Activated T-helper 1 cell treated with anti-CD3 and anti-CD28 coated beads, Interleukin-12 subunit alpha, Interleukin-12 subunit beta, Interleukin-2, Interleukin-4 antibody, amounts not matched to agents 30 ng/mL and 10 ng/mL and 1 ng/mL, durations not matched to agents 14 hours and 24 hours and 36 hours (primary cell): ENCODE measurements at regions of chr5 and their contacts with region 1.

Region 1: DNA sequence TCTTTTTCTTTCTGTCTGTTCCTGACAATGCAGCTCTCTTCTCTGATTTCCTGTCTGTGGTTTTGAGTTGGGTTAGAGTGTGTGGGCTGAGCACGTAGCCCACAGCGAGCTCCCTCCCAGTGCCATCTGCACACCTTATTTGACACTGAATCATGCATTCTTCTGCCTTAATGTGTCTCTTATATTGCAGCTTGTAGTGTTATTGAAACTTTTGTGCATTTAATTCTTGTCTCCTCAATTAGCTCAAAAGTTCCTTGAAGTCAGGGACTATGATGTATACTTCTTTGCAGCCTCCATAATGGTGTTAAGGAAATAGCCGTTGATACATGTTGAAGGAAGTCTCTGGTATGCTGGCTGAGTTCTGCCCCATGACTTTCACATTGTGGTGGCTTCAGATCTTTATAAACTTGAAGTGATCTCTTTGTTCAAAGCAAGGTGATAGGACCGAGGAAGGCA is 576.2 kb upstream of the CLINT1 start:
- DNase-seq: peak; percentile 17
- H3K4me3 Mint-ChIP-seq: peak overlapping the region; percentile 48
- H3K27ac Mint-ChIP-seq: peak overlapping the region; percentile 91
- H3K4me1 Mint-ChIP-seq: peaks cover 48% of the 10 kb centered on the region
- H3K27me3 Mint-ChIP-seq: peaks cover 2% of the 10 kb centered on the region

Region 2: DNA sequence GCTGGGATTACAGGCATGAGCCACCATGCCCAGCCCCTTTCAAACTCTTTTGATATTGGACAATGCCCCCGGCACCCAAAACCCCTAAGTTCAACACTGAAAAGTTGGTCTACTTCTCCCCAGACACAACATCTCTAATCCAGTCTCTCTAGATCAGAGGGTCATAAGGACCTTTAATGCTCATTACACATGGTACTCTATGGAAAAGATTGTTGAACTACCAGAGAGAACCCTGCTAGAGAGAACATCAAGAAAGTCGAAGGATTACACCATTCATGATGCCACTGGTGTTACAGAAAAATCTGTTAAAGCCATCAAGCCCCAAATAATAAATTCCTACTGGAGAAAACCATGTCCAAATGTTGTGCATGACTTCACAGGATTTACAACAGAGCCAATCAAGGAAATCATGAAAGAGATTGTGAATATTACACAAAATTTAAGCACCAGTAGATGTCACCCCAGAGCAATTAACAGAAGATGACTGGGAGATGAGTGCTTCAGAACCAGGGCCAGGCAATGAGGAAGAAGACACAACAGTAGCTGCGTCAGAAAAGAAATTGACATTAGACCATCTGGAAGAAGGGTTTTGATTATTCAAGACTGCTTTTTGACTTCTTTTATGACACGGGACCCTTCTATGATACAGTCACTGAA is 1003.5 kb before region 1 on chr5:
- intact Hi-C with region 1: no loop called
- DNase-seq: peak; percentile 7
- H3K4me3 Mint-ChIP-seq: no peak overlapping the region
- H3K27ac Mint-ChIP-seq: no peak overlapping the region
- H3K4me1 Mint-ChIP-seq: peaks cover 8% of the 10 kb centered on the region
- H3K27me3 Mint-ChIP-seq: peaks cover 22% of the 10 kb centered on the region

Region 3: DNA sequence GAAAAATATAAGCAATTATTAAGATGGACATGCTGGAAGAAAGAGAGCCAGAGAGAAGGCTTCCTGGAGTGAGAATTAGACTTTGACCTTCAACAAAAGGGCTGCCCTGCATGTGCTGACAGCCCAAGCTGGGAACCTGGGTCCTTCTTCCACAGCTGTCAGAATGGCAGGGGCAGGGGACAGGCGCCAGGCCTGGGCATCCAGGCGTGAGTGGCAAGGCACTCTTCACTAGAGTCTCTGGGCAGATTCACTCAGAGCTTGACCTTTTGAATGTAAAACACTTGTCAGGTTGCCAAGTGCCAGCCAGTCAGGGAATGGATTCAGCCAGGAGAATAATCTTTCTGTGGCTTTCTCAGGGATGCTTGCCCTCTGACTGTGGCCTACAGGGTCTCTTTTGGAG is 457.1 kb before region 1 on chr5:
- intact Hi-C with region 1: no loop called
- DNase-seq: no peak
- H3K4me3 Mint-ChIP-seq: no peak overlapping the region
- H3K27ac Mint-ChIP-seq: no peak overlapping the region
- H3K4me1 Mint-ChIP-seq: no peaks in the 10 kb centered on the region
- H3K27me3 Mint-ChIP-seq: peaks cover 14% of the 10 kb centered on the region

Region 4: GRCh38 chr5:158513490-158514318 is 78.5 kb after region 1 on chr5:
- intact Hi-C with region 1: loop called (anchors 2 kb)
- DNase-seq: no peak
- H3K4me3 Mint-ChIP-seq: peak overlapping the region; percentile 27
- H3K27ac Mint-ChIP-seq: peak overlapping the region; percentile 73
- H3K4me1 Mint-ChIP-seq: peaks cover 33% of the 10 kb centered on the region
- H3K27me3 Mint-ChIP-seq: no peaks in the 10 kb centered on the region

Region 5: DNA sequence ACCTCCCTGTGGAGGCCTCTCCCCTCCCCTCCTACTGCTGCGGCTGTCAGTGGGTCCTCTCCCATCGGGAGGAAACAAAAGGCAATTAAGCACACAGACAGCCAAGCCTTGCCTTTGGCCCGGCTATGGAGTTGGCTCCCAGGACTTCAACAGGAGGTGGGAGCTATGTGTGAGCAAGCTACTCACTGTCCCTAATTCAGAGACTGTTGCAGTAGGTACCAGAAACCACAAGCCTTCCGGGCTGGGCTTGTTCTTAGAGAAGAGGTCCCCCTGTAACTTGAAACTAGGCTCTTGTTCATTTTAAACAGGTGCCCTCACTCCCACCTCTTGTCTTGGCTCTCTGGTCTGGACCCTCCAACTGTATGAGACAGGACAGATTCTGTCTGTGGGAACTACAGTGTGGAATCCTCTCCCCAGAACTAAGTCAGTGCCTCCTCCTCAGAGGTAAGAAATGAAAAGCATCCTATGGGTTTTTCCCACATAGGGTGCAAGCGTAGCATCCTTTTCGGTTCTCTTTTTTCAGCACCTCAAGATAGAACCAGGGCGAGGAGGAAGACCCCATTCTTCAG is 103.4 kb after region 1 on chr5:
- intact Hi-C with region 1: no loop called
- DNase-seq: no peak
- H3K4me3 Mint-ChIP-seq: no peak overlapping the region
- H3K27ac Mint-ChIP-seq: no peak overlapping the region
- H3K4me1 Mint-ChIP-seq: peaks cover 4% of the 10 kb centered on the region
- H3K27me3 Mint-ChIP-seq: peaks cover 11% of the 10 kb centered on the region

Region 6: DNA sequence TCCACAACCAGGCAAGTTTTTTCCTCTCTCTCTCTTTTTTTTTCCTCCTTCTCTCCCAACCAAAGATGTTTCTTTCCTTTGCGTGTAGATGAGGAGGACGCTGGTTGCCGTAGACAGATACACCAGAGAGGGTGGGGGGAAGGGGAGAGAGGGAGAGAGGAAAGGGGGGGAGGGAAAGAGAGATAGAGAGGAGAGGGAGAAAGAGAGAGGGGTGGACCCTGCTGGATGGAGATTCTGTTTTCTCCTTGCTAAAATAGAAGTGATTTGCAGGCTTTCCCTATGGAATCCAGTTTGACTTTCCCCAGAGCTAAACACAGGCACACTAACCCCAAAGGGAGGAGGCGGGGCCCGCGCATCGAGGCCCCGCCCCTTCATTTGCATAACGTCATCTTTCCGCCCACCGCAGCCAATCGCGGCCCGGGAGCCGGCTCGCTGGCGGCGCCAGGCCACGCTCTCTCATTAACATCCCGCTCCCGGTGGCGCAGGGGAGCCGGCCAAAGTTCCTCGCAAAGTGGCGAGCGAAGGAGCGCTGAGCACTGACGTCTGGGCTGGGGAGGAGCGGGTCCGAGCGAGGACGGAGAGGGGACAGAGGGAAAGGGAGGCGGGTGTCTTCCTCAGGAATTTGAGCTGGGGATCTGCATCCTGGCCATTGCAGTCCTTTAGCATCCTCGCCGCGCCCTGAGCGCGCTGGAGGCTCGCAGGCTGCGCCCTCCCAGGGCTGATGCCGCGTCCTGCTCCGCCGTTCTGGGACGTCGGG is 665.0 kb after region 1 on chr5:
- intact Hi-C with region 1: loop called (anchors 2 kb)
- DNase-seq: peak; percentile 84
- H3K4me3 Mint-ChIP-seq: peak overlapping the region; percentile 86
- H3K27ac Mint-ChIP-seq: peak overlapping the region; percentile 51
- H3K4me1 Mint-ChIP-seq: peaks cover 34% of the 10 kb centered on the region
- H3K27me3 Mint-ChIP-seq: peaks cover 80% of the 10 kb centered on the region